Right lobe of liver (tissue), 6 donors: ENCODE measurements at regions of chr3 and their contacts with region 1.

Region 1: GRCh38 chr3:52238761-52239701 is at the start of gene TWF2:
- DNase-seq: peak; percentile 77 to 85 (median 85)
- ATAC-seq: peak; percentile 68 to 85 (median 78)
- H3K4me3 ChIP-seq: peak within 1 kb of the TSS; percentile 82 to 94 (median 89)
- H3K27ac ChIP-seq: peak within 1 kb of the TSS; percentile 78 to 94 (median 83)
- H3K4me1 ChIP-seq: peaks cover 0 to 41% (median 20%) of the 10 kb centered on the region in 4 donors
- H3K27me3 ChIP-seq: no peaks in the 10 kb centered on the region
- CTCF ChIP-seq: peak; percentile 25 to 34 (median 30)
- POLR2A ChIP-seq: peak; percentile 54
- total RNA-seq, gene TWF2: 12.9 to 34.4 (median 23.7) TPM

Region 2: GRCh38 chr3:52108302-52109232 is 130.5 kb before region 1 on chr3:
- intact Hi-C with region 1: no loop called
- DNase-seq: peak in 1 of 3 donors; percentile 46
- ATAC-seq: no peak
- H3K4me3 ChIP-seq: no peak overlapping the region
- H3K27ac ChIP-seq: no peak overlapping the region
- H3K4me1 ChIP-seq: peaks cover 0 to 12% (median 6%) of the 10 kb centered on the region in 4 donors
- H3K27me3 ChIP-seq: no peaks in the 10 kb centered on the region
- CTCF ChIP-seq: peak in 1 of 4 donors; percentile 4
- POLR2A ChIP-seq: no peak

Region 3: GRCh38 chr3:52278510-52279069 is 39.6 kb after region 1 on chr3 and contains the start of gene WDR82:
- intact Hi-C with region 1: loop called in 1 of 2 experiments (anchors 5 kb)
- DNase-seq: peak; percentile 98 to 99 (median 99)
- ATAC-seq: peak; percentile 87 to 95 (median 90)
- H3K4me3 ChIP-seq: peak within 1 kb of the TSS; percentile 84 to 97 (median 90)
- H3K27ac ChIP-seq: peak within 1 kb of the TSS; percentile 97
- H3K4me1 ChIP-seq: peaks cover 0 to 54% (median 18%) of the 10 kb centered on the region in 4 donors
- H3K27me3 ChIP-seq: no peaks in the 10 kb centered on the region
- CTCF ChIP-seq: peak; percentile 36 to 43 (median 40)
- POLR2A ChIP-seq: peak; percentile 94
- total RNA-seq, gene WDR82: 14.1 to 25.2 (median 20.7) TPM

Region 4: GRCh38 chr3:52483577-52484381 is 244.7 kb after region 1 on chr3:
- intact Hi-C with region 1: no loop called
- DNase-seq: no peak
- ATAC-seq: no peak
- H3K4me3 ChIP-seq: no peak overlapping the region
- H3K27ac ChIP-seq: no peak overlapping the region
- H3K4me1 ChIP-seq: peaks cover 0 to 4% (median 0%) of the 10 kb centered on the region in 4 donors
- H3K27me3 ChIP-seq: no peaks in the 10 kb centered on the region
- CTCF ChIP-seq: no peak
- POLR2A ChIP-seq: no peak